SK-N-SH (cell line): ENCODE measurements at regions of chr1 and their contacts with region 1.

Region 1: DNA sequence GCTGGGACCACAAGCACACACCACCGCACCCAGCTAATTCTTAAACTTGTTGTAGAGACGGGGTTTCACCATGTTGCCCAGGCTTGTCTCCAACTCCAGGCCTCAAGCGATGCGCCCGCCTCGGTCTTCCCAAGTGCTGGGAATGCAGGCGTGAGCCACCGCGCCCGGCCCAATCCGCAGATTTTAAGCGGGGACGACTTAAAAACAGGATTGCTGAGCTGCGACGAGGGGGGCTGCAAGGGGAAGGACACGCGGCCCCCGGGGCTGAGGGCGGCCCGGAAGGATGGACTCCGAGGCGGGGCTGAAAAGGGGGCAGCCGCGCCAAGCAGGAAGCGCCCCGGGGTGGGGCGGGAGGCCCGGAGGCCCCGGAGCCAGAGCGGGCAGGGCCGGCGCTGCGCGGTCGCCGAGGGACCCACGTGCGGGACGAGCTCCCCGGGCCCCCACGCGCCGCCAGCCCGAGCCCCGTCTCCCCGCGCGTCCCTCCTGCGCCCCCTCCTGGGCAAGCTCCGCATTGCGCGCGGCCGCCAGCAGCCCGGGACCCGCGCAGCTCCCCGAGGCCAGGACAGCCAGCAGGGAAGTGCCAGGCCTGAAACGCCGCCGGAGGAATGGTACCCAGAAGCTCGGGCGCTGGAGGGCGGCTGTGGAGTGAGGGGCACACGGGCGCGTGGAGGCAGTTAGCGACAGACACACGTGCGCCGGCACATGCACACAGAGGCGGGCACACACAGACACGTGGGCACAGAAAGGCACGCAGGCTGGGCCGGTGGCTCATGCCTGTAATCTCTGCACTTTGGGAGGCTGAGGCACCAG is 5.5 kb upstream of the PRKCZ start:
- DNase-seq: peak; percentile 97
- H3K4me3 ChIP-seq: peak overlapping the region; percentile 15 to 41; a peak in 1 of 4 replicates
- H3K27ac ChIP-seq: no peak overlapping the region
- H3K4me1 ChIP-seq: peaks cover 0 to 6% of the 10 kb centered on the region in 2 experiments; a peak in 1 of 4 replicates
- H3K27me3 ChIP-seq: no peaks in the 10 kb centered on the region
- CTCF ChIP-seq: peak; percentile 58
- EP300 ChIP-seq: no peak
- RAD21 ChIP-seq: peak; percentile 71

Region 2: DNA sequence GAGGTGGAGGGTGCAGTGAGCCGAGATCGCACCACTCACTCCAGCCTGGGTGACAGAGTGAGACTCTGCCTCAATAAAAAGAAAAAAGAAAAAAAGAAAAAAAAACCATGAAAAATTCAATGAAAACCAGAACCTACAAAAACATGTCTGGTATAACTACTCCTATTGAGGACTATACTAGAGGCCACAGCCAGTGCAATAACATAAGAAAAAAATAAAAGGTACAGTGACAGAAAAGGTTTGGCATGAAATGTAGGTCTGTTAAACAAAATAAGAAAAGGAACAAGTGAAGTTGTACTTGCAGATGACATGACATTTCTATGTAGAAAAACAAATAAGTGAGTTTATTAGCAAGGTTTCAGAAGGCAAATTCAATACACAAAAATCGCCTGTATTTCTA is 274.6 kb before region 1 on chr1:
- CTCF ChIA-PET with region 1: no interaction called
- POLR2A ChIA-PET with region 1: no interaction called
- DNase-seq: no peak
- H3K4me3 ChIP-seq: no peak overlapping the region
- H3K27ac ChIP-seq: no peak overlapping the region
- H3K4me1 ChIP-seq: no peaks in the 10 kb centered on the region
- H3K27me3 ChIP-seq: no peaks in the 10 kb centered on the region
- CTCF ChIP-seq: no peak
- EP300 ChIP-seq: no peak
- RAD21 ChIP-seq: no peak

Region 3: DNA sequence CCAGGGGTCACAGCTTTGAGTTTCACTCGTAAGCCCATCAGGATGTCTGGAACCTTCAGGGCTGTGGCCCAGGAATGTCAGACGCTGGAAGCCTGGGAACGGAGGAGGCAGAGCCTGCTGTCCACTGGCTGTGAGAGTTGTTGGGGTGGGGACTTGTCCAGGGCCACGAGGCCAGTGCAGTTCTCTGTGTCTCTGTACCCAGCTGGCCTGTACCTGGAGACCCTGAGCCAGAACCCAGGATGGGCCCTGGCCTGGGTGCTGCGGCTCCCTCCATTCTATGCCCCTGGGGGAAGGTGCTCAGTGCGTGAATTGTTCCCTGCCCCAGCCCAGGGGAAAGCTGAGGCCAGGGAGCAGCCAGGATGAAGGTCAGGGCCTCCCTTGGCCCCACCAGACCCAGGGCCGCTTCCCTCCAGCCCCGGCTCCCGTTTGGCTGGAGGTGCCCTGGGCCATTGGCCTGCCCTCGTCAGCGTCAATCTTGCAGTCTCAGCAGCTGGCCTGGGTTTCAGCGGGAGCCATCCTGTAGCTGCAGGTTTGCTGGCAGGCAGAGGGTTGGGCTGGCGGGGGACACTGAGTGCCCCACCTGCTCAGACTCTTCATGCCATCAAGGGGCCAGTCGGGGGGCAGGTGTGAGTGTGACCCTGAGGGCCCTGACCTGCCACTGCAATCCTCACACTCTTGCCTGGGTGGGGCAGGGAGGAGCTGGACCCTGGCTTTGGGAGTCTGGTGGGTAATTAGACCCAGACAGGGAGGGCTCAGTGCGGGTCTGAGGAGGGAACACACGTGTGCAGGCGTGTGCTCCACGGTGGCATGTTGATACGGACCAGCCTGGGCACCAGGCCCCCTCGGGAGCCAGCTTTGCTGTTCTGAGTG is 130.4 kb before region 1 on chr1:
- CTCF ChIA-PET with region 1: interaction called, 22 read pairs
- POLR2A ChIA-PET with region 1: no interaction called
- DNase-seq: no peak
- H3K4me3 ChIP-seq: no peak overlapping the region
- H3K27ac ChIP-seq: no peak overlapping the region
- H3K4me1 ChIP-seq: peaks cover 0 to 16% of the 10 kb centered on the region in 2 experiments; a peak in 1 of 4 replicates
- H3K27me3 ChIP-seq: no peaks in the 10 kb centered on the region
- CTCF ChIP-seq: no peak
- EP300 ChIP-seq: no peak
- RAD21 ChIP-seq: no peak

Region 4: DNA sequence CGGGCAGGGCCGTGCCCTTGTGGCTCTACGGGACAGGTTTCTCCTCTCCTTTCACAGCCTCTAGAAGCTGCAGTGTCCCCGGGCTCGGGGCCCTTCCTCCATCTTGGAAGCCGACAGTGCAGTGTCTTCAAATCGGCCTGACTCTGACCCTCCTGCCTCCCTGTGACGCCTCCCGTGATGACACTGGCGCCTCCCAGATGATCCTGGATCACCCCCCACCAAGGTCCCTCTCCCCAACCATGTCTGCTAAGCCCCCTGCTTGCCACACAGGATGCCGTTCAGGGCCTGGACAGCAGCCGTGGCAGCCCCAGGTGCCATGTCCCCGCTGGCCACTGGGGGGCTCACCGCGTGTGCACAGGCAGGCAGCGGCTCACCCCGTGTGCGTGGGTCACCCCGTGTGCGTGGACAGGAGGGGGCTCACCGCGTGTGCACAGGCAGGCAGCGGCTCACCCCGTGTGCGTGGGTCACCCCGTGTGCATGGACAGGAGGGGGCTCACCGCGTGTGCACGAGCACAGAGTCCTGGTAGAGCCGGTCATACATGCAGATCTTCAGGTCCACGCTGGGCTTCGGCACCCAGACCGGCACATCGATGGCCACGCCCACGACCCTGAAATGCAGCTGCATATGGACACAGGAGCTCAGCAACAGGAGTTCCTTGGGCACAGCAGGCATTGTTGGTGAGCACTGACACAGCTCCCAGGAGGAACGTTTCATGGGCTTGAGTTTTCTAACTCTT is 100.7 kb before region 1 on chr1:
- CTCF ChIA-PET with region 1: interaction called, 152 read pairs
- POLR2A ChIA-PET with region 1: interaction called, 6 read pairs
- DNase-seq: peak; percentile 93
- H3K4me3 ChIP-seq: peak overlapping the region; percentile 26 to 38; a peak in 3 of 4 replicates
- H3K27ac ChIP-seq: no peak overlapping the region
- H3K4me1 ChIP-seq: peaks cover 0 to 22% of the 10 kb centered on the region in 2 experiments; a peak in 1 of 4 replicates
- H3K27me3 ChIP-seq: no peaks in the 10 kb centered on the region
- CTCF ChIP-seq: peak; percentile 66
- EP300 ChIP-seq: no peak
- RAD21 ChIP-seq: peak; percentile 50

Region 5: GRCh38 chr1:1966071-1966740 is 78.5 kb before region 1 on chr1:
- CTCF ChIA-PET with region 1: interaction called, 268 read pairs
- POLR2A ChIA-PET with region 1: interaction called, 4 read pairs
- DNase-seq: no peak
- H3K4me3 ChIP-seq: no peak overlapping the region
- H3K27ac ChIP-seq: no peak overlapping the region
- H3K4me1 ChIP-seq: no peaks in the 10 kb centered on the region
- H3K27me3 ChIP-seq: no peaks in the 10 kb centered on the region
- CTCF ChIP-seq: no peak
- EP300 ChIP-seq: no peak
- RAD21 ChIP-seq: no peak

Region 6: GRCh38 chr1:1985375-1986050 is 59.2 kb before region 1 on chr1:
- CTCF ChIA-PET with region 1: interaction called, 34 read pairs
- POLR2A ChIA-PET with region 1: no interaction called
- DNase-seq: no peak
- H3K4me3 ChIP-seq: no peak overlapping the region
- H3K27ac ChIP-seq: no peak overlapping the region
- H3K4me1 ChIP-seq: peaks cover 0 to 12% of the 10 kb centered on the region in 2 experiments; a peak in 1 of 4 replicates
- H3K27me3 ChIP-seq: no peaks in the 10 kb centered on the region
- CTCF ChIP-seq: no peak
- EP300 ChIP-seq: no peak
- RAD21 ChIP-seq: no peak

Region 7: GRCh38 chr1:2031546-2032540 is 12.9 kb before region 1 on chr1:
- CTCF ChIA-PET with region 1: interaction called, 138 read pairs
- POLR2A ChIA-PET with region 1: interaction called, 5 read pairs
- DNase-seq: peak; percentile 89
- H3K4me3 ChIP-seq: no peak overlapping the region
- H3K27ac ChIP-seq: peak overlapping the region in 1 of 2 experiments; percentile 43; a peak in 1 of 4 replicates
- H3K4me1 ChIP-seq: peaks cover 0 to 21% of the 10 kb centered on the region in 2 experiments; a peak in 1 of 4 replicates
- H3K27me3 ChIP-seq: no peaks in the 10 kb centered on the region
- CTCF ChIP-seq: no peak
- EP300 ChIP-seq: peak in 1 of 2 experiments; percentile 55; a peak in 1 of 4 replicates
- RAD21 ChIP-seq: no peak

Region 8: DNA sequence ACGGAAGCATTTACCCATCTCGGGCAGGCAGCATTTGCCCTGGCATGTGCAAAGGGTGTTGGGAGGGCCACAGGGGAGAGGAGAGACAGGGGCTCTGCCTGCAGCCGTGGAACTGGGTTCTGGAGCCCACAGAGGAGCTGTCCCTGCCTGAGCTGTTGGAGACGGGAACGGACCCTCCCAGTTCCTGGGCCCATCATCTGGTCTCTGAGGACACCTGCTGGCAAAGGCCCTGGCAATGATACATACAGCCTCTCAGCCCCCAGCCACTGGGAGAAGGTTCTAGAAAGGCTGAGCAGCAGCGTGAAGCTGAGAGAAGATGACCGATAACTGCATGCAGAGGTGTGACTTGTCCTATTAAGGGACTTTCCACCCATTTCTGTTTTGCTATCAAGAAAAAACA is 118.5 kb after region 1 on chr1:
- CTCF ChIA-PET with region 1: no interaction called
- POLR2A ChIA-PET with region 1: no interaction called
- DNase-seq: no peak
- H3K4me3 ChIP-seq: no peak overlapping the region; a peak in 1 of 4 replicates
- H3K27ac ChIP-seq: no peak overlapping the region
- H3K4me1 ChIP-seq: no peaks in the 10 kb centered on the region; a peak in 1 of 4 replicates
- H3K27me3 ChIP-seq: no peaks in the 10 kb centered on the region
- CTCF ChIP-seq: no peak
- EP300 ChIP-seq: no peak
- RAD21 ChIP-seq: no peak

Region 9: DNA sequence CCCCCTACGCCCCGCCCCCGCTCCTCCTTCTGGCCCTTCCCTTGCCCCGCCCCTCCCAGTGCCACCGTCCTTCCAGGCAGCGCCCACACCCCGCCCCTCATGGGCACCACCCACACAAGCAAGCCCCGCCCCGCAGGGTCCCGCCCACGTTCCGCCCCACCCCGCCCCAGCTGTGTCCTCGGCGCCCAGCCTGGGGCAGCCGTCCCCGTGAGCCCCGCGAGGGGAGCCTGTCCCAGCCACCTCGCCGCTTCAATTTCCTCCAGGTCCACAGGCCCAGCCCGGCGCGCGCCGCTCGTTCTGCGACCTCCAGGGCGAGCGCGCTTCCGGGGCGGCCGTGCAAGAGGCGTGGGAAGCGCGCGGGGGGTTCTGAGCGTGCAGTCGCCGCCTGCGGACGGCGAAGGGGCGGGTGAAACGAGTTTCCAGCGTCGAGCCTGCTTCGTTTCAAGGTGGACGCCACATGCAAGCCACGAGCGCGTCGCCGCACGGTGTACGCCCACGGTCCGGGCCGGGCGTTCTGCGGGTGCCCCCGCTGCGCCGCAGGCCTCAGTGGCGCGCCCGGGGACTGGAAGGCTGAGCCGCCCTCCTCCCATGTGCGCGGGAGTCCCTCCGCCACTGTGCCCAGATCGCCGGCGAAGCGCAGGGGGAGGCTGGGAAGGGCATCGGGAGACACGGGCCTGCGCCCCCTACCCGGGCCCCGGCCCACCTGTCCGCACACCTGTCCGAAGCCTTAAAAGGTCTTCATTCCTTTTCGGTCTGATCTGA is 160.7 kb after region 1 on chr1:
- CTCF ChIA-PET with region 1: no interaction called
- POLR2A ChIA-PET with region 1: no interaction called
- DNase-seq: no peak
- H3K4me3 ChIP-seq: peak overlapping the region; percentile 47 to 48; a peak in 2 of 4 replicates
- H3K27ac ChIP-seq: peak overlapping the region; percentile 36 to 69; a peak in 1 of 4 replicates
- H3K4me1 ChIP-seq: peaks cover 9 to 31% of the 10 kb centered on the region in 2 experiments; a peak in 2 of 4 replicates
- H3K27me3 ChIP-seq: no peaks in the 10 kb centered on the region
- CTCF ChIP-seq: no peak
- EP300 ChIP-seq: no peak
- RAD21 ChIP-seq: no peak